ENCODE measurements at regions of chr19 and their contacts with region 1.

Region 1: DNA sequence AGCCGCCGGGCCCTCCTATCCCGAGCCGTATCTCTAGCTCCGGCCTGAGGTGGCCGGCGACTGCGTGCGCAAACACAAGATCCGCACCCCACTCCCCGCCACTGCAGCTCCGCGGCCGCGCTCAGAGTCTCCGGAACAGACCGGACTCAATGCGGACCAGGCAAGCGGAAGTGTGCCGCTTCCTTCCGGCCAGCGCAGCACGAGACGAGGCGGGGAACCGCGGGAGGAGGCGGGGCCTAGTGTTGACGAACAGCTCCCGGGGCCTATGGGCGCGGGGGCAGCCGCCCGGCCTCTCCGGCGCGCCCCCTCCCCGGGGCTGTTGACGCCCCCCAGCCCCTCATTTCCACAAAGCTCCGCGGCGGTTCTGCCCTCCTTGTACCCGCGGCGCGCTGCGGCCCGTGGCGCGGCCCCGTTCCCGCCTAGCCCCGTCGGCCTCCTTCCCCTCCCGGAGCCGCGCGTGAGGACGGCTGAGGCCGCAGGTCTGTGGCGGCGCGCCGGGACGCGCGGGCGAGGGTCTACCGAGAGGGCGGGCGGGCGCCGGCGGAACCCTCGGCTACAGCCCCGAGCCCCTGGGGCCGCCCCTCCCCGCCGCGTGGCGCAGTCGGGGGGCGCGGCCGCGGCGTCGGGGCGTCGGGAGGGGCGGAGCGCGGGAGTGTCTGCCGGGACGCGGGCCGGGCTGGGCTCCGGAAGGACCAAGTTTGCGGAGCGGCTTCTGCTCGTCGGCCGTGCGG is at the start of gene DPY19L3:
- H3K4me3 ChIP-seq: peak within 1 kb of the TSS; percentile 76
- H3K27ac ChIP-seq: peak within 1 kb of the TSS; percentile 97
- H3K4me1 ChIP-seq: peaks cover 18% of the 10 kb centered on the region
- CTCF ChIP-seq: peak; percentile 5; the same call in 1 of the 2 replicates

Region 2: DNA sequence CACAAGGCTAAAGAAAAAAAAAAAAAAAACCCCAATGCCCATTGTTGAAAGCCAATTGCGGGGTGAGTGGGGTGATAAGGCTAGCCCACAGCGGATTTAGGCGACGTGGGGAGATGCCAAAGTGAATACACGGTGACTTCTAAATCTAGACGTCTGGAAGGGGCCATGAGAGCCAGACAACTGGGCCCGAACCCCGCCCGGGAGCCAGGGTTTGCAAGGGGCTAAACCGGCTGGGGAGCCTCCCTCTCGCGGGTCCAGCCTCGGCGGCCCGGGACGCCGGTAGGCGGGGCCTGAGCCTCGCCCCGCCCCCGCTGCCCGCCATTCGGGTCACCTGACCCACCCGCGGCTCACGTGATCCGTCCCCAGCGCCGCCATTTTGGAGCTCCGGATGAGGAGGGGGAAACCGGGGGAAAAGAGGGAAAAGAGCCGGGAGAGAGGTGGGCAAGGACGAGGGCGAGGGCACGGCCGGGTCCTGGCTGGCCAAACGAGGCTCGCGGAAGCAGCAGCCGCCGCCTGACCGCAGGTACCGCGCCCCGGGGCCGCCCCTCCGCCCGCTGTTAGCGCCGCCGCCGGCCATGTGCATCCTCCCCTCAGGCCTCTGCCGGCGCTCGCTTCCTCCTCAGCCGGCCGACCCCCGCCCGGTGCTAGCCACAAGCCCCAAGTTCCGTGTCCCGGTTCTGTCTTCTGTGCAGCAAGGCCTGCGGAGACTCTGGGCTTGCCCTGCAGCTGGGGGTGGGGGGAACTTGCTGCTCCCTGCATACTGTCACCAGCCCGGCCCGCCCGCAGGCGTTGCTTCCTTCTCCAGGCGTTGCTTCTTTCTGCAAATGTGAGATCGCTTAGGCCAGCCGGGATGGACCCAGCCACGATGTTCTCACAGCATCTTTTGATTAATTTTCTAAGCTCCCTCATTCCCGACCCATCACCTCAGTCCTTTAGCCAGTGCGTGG is 60.1 kb before region 1 on chr19 and contains the start of gene ZNF507:
- CTCF ChIA-PET with region 1: interaction called, 7 read pairs
- POLR2A ChIA-PET with region 1: interaction called, 18 read pairs
- H3K4me3 ChIP-seq: peak within 1 kb of the TSS; percentile 91
- H3K27ac ChIP-seq: peak within 1 kb of the TSS; percentile 87
- H3K4me1 ChIP-seq: peaks cover 32% of the 10 kb centered on the region
- CTCF ChIP-seq: peak; percentile 91

Region 3: GRCh38 chr19:32373585-32374295 is 31.9 kb before region 1 on chr19:
- CTCF ChIA-PET with region 1: interaction called, 3 read pairs
- POLR2A ChIA-PET with region 1: interaction called, 24 read pairs
- H3K4me3 ChIP-seq: no peak overlapping the region
- H3K27ac ChIP-seq: peak overlapping the region; percentile 47
- H3K4me1 ChIP-seq: peaks cover 18% of the 10 kb centered on the region
- CTCF ChIP-seq: no peak

Region 4: DNA sequence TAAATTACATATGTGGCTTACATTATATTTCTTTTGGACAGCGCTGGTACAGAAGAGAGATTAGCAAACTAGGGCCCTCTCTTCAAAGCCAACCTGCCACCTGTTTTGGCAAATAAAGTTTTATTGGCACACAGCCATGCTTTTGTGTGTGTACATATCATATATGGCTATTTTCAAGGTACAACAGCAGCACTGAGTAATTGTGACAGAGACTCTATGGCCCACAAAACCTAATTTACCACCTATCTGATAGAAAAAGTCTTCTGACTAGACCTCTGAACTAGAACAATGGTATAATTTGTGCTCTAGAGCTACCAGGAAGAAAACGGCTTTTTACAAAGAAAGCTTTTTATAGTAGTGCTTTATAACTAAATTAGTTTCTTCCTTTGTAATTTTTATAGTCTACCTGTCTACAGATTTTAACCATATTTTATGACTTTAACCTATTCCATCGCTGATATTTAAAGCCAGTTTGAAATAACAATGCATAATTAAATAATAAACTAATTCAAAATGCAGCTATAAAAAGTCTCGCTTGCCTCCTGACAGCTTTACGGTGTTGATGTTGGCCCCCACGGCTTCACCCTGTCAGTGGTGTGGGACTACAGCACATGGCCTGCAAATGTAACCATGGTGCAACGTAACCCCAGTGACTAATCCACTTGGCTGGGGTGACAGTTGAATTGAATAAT is 17.7 kb before region 1 on chr19:
- CTCF ChIA-PET with region 1: interaction called, 5 read pairs
- POLR2A ChIA-PET with region 1: interaction called, 11 read pairs
- H3K4me3 ChIP-seq: no peak overlapping the region
- H3K27ac ChIP-seq: peak overlapping the region; percentile 25; the same call in 1 of the 2 replicates
- H3K4me1 ChIP-seq: peaks cover 22% of the 10 kb centered on the region
- CTCF ChIP-seq: no peak

Region 5: GRCh38 chr19:32392901-32393300 is 12.7 kb before region 1 on chr19:
- CTCF ChIA-PET with region 1: interaction called, 3 read pairs
- POLR2A ChIA-PET with region 1: interaction called, 11 read pairs
- H3K4me3 ChIP-seq: no peak overlapping the region
- H3K27ac ChIP-seq: no peak overlapping the region
- H3K4me1 ChIP-seq: peaks cover 9% of the 10 kb centered on the region
- CTCF ChIP-seq: no peak

Region 6: GRCh38 chr19:32416749-32417456 is 11.3 kb after region 1 on chr19:
- CTCF ChIA-PET with region 1: interaction called, 3 read pairs
- POLR2A ChIA-PET with region 1: interaction called, 20 read pairs
- H3K4me3 ChIP-seq: no peak overlapping the region
- H3K27ac ChIP-seq: no peak overlapping the region
- H3K4me1 ChIP-seq: no peaks in the 10 kb centered on the region
- CTCF ChIP-seq: no peak

Region 7: GRCh38 chr19:32498648-32499200 is 93.1 kb after region 1 on chr19:
- CTCF ChIA-PET with region 1: no interaction called
- POLR2A ChIA-PET with region 1: no interaction called
- H3K4me3 ChIP-seq: no peak overlapping the region
- H3K27ac ChIP-seq: no peak overlapping the region
- H3K4me1 ChIP-seq: no peaks in the 10 kb centered on the region
- CTCF ChIP-seq: no peak

Region 8: GRCh38 chr19:32519023-32519422 is 113.4 kb after region 1 on chr19:
- CTCF ChIA-PET with region 1: no interaction called
- POLR2A ChIA-PET with region 1: no interaction called
- H3K4me3 ChIP-seq: no peak overlapping the region
- H3K27ac ChIP-seq: no peak overlapping the region
- H3K4me1 ChIP-seq: no peaks in the 10 kb centered on the region
- CTCF ChIP-seq: no peak

Region 9: GRCh38 chr19:32580901-32581703 is 175.5 kb after region 1 on chr19 and contains the start of gene PDCD5:
- CTCF ChIA-PET with region 1: interaction called, 5 read pairs
- POLR2A ChIA-PET with region 1: interaction called, 13 read pairs
- H3K4me3 ChIP-seq: peak within 1 kb of the TSS; percentile 76
- H3K27ac ChIP-seq: peak within 1 kb of the TSS; percentile 98
- H3K4me1 ChIP-seq: peaks cover 21% of the 10 kb centered on the region
- CTCF ChIP-seq: no peak

Region 10: GRCh38 chr19:32682317-32682716 is 276.7 kb after region 1 on chr19:
- CTCF ChIA-PET with region 1: no interaction called
- POLR2A ChIA-PET with region 1: no interaction called
- H3K4me3 ChIP-seq: no peak overlapping the region
- H3K27ac ChIP-seq: no peak overlapping the region
- H3K4me1 ChIP-seq: peaks cover 3% of the 10 kb centered on the region; the same call in 1 of the 2 replicates
- CTCF ChIP-seq: no peak